Common myeloid progenitor, CD34-positive (primary cell): ENCODE measurements at regions of chr22 and their contacts with region 1.

Region 1: DNA sequence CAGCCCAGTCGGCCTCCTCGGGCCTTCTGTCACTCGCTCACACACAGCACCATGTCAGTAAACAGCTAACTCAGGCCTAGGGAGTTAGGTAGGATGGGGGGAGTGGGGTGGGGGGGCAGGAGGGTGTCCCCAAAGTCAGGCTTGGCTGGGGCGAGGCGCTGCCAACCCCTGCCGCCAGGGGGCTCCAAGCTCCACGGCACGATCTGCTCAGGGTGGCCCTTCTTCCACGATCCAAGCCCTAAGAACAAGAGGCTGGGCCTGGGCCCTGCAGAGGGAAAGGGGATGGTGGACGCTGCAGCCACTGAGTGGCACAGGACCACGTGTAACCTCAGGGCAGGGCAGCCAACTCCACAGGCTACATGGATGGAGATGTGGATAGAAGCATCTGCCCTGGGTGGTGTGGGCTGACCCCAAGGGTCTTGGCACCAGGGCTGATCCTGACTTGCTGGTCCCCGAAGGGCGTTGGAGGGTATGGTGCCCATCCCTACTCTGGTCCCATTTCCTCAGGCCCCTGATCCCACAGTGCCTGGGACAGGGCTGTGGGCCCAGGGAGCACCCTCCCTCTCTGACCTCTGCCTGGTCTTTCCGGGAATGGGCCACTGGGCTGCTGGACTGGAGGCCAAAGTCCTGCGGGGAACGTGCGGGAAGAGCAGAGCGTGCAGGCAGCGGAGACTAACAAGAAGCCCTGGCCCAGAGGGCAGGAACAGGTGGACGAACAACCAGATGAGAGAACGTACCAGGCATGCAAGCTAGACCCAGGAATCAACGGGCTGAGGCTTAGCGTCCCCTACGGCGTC is 29.1 kb upstream of the TXNRD2 start:
- DNase-seq: peak; percentile 66 to 86 (median 81)
- H3K4me3 ChIP-seq: no peak overlapping the region
- H3K27ac ChIP-seq: no peak overlapping the region
- H3K4me1 ChIP-seq: peaks cover 0 to 51% (median 40%) of the 10 kb centered on the region in 4 experiments
- H3K27me3 ChIP-seq: no peaks in the 10 kb centered on the region

Region 2: DNA sequence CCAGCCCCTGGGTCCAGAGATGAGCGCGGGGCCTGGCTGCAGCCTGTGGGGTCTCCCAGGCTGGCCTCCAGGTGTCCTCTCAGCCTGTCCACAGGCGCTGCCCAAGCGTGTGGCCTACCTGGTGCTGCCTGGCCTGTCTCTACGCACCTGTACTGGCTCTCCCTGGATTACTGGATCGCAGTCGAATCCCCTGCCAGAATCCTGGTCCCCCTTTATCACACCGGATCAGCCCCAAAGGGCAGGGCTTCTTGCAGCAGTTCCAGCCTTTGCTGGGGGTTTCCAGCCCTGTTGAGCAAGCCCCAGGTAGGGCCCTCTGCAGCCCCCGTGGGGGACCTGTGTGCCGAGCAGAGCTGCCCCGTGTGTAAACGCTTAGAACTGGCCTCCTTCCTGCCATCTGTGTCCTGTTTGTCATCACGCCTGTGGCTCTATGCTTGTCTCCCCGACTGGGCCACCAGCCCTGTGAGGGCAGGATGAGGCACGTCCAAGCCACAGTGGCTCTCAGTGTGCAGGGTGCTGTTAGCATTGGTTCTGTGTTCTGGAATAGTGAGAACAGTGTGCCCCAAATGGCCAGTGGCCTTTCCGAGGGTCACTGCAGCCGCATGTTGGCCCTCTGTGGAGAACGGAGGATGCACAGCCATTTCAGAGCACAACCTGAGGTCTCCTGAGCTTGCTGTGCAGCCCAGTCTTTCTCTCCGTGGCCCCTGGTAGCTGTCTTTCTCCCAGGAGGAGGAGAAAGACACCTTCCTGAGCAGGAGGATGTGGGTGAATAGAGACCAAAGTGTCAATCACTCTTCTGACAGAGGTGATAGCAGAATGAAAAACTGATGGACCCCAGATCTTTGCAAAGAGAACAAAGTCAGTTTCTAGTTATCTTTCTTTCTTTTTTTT is 15.2 kb before region 1 on chr22:
- CTCF ChIA-PET with region 1: interaction called, 39 read pairs
- POLR2A ChIA-PET with region 1: no interaction called
- DNase-seq: peak; percentile 57 to 98 (median 96)
- H3K4me3 ChIP-seq: peak overlapping the region in 2 of 7 experiments; percentile 45 to 46
- H3K27ac ChIP-seq: peak overlapping the region; percentile 37 to 72
- H3K4me1 ChIP-seq: peaks cover 0 to 45% (median 25%) of the 10 kb centered on the region in 4 experiments
- H3K27me3 ChIP-seq: no peaks in the 10 kb centered on the region

Region 3: DNA sequence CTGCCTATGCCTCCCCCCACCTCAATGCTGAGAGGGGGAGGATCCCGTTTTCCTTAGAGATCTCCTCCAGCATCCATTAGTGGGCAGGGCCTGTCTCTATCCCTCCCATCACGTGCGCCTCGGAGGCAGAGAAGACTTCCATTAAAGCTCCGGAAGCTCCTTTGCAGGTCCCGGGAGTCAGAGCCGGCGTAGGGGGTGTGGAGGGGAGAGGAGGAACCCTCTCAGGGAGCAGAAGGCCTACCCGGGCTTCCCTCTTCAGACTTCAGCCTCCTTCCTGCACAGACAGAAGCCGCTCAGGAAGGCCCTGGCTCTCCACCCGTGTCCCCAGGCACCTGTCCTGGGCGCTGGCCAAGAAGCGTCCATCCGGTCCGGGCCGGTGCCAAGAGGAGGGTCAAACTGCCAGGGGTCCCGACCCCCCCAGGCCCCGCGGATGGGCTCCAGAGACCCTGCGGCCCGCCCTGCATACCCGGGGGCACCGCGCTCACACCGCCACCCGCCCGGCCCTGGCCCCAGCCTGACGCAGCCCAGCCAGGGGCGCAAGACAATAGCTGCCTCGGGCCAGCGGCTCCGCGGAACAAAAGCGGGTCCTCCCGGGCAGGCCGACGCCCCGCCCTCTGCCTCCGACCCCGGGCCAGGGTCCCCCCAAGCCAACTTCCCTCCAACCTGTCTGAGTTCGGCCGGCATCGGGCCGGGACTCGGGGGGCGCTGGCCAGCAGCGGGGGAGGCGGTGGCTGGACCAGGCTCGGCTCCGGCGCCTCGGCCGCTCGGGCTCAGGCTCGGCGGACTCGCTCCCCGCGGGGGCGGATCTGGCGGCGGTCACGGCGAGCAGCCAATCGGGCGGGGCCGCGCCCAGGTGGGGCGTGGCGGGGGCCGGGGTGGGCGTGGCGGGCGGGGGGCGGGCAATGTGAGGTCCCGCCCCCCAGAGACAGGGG is 16.0 kb after region 1 on chr22:
- CTCF ChIA-PET with region 1: interaction called, 10 read pairs
- POLR2A ChIA-PET with region 1: interaction called, 4 read pairs
- DNase-seq: peak; percentile 42 to 70 (median 66)
- H3K4me3 ChIP-seq: peak overlapping the region; percentile 34 to 84 (median 76)
- H3K27ac ChIP-seq: peak overlapping the region in 1 of 2 experiments; percentile 63
- H3K4me1 ChIP-seq: peaks cover 0 to 36% (median 20%) of the 10 kb centered on the region in 4 experiments
- H3K27me3 ChIP-seq: no peaks in the 10 kb centered on the region

Region 4: GRCh38 chr22:20000169-20000621 is 29.5 kb after region 1 on chr22:
- CTCF ChIA-PET with region 1: interaction called, 10 read pairs
- POLR2A ChIA-PET with region 1: interaction called, 3 read pairs
- DNase-seq: no peak
- H3K4me3 ChIP-seq: no peak overlapping the region
- H3K27ac ChIP-seq: no peak overlapping the region
- H3K4me1 ChIP-seq: peaks cover 0 to 42% (median 30%) of the 10 kb centered on the region in 4 experiments
- H3K27me3 ChIP-seq: no peaks in the 10 kb centered on the region

Region 5: DNA sequence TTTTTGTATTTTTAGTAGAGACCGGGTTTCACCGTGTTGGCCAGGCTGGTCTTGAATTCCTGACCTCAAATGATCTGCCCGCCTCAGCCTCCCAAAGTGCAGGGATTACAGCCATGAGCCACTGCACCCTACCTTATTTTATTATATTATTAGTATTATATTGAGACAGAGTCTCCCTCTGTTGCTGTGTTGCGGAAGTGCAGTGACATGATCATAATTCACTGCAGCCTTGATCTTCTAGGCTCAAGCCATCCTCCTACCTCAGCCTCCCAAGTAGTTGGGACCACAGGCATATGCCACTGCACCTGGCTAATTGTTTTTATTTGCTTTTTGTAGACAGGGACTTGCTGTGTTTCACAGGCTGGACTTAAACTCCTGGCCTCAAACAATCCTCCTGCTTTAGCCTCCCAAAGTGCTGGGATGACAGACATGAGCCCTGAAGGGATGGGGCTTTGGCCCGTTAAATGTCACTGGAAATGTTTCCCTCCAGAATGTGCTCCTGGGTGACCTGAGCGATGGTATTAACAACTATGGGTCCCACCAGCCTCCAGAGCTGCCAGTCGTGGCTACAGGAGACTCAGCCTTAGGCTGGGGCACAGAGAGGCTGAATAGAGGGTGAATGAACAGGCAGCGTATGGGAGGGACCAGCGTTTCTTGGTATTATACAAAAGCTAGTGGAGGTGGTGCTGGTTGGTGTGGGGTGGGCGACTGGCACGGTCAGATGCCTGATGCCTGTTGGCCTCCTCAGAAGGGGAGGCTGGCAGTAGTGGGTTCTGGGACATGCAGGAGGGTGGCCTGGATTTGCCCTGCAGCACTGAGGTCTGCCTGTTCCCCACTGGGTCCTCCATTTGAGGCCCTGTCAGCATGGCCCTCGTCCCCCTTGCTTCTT is 57.5 kb after region 1 on chr22:
- CTCF ChIA-PET with region 1: interaction called, 20 read pairs
- POLR2A ChIA-PET with region 1: no interaction called
- DNase-seq: peak in 2 of 3 donors; percentile 26 to 36
- H3K4me3 ChIP-seq: no peak overlapping the region
- H3K27ac ChIP-seq: no peak overlapping the region
- H3K4me1 ChIP-seq: peaks cover 0 to 25% (median 17%) of the 10 kb centered on the region in 4 experiments
- H3K27me3 ChIP-seq: no peaks in the 10 kb centered on the region

Region 6: GRCh38 chr22:20130739-20131596 is 160.3 kb after region 1 on chr22:
- CTCF ChIA-PET with region 1: interaction called, 14 read pairs
- POLR2A ChIA-PET with region 1: no interaction called
- DNase-seq: peak; percentile 63 to 79 (median 74)
- H3K4me3 ChIP-seq: peak overlapping the region; percentile 70 to 92 (median 79)
- H3K27ac ChIP-seq: peak overlapping the region; percentile 33 to 77
- H3K4me1 ChIP-seq: peaks cover 0 to 38% (median 32%) of the 10 kb centered on the region in 4 experiments
- H3K27me3 ChIP-seq: no peaks in the 10 kb centered on the region